ENCODE measurements at regions of chr10 and their contacts with region 1.

Region 1: DNA sequence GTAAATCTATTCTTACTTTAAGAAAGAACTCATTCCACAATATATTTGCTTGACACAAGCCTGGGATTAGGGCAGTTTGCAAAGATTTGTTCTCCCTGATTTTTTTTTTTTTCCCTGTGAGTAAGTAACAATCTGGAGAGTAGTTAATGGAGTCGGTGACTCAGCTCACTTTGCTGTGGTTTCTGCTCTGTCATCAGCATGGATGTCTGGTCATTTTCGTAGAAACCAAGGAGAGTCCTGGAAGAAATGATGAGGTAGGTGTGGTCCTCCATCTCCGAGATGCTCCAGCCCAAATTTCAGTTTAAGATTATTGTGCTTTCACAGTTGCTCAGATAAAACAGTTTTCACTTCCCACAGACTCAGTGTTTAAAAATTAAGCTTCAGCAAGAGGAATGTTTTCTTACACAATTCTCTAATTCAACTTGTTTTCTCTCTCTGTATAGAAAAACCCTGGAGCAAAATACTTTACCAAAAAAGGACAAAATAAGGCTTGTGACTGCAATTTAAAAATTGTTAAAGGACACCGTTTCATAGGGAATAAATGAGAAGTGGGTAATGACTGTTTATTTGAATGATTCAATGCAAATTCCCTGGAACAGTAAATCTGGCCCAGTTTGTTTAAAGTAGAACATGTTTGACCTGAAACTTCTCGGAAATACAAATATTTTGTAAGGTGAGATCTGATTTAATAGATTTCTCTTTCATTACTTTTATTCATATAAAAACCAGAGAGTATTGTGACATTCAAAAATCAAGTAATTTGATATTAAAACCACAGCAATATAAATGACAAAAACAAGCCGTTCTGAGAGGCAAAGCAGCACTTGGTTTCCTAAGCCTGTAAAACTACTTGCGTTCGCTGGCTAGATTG is 76.5 kb upstream of the PITRM1 start:
- DNase-seq: no peak

Region 2: DNA sequence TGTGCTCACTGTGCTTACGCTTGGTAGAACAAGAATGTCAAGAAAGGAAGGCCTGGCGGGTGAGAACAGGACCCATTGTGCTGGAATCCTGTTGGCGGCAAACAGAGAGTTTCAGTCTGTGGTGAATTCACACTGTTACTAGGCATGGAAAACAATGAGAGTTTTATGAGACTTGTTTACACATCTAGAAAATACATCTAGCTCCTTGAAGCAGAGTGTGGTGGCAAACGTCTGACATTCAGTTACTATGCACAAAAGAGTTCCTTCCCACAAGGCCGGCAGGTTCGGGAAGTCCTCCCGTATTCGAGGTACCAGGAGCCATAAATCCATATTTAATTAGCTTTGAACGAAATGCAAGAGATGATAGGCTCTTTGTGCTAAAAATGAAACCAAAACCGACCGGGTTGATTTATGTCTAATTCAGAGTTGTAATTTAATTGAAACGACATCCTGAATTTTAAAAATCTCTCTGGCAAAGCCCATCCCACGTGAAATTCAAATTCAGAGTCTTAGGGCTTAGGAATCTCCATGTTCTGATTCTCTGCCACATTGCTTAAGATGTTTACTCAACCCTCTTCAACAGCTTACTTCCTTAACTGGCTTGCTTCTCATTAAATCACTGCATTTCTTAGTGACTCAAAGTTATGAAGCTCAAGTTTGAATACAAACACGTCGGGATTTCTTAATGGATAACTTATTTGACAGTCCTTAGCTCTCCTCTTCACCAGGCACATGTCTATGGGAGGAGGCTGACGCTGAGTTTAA is 223.3 kb after region 1 on chr10:
- intact Hi-C with region 1: loop called in 1 of 2 experiments (anchors 10 kb)
- DNase-seq: no peak

Region 3: GRCh38 chr10:3775696-3776551 is 526.8 kb after region 1 on chr10:
- intact Hi-C with region 1: loop called in 1 of 2 experiments (anchors 2 kb)
- DNase-seq: peak; percentile 82

Region 4: GRCh38 chr10:4162571-4163286 is 913.6 kb after region 1 on chr10:
- intact Hi-C with region 1: no loop called
- DNase-seq: no peak

Region 5: DNA sequence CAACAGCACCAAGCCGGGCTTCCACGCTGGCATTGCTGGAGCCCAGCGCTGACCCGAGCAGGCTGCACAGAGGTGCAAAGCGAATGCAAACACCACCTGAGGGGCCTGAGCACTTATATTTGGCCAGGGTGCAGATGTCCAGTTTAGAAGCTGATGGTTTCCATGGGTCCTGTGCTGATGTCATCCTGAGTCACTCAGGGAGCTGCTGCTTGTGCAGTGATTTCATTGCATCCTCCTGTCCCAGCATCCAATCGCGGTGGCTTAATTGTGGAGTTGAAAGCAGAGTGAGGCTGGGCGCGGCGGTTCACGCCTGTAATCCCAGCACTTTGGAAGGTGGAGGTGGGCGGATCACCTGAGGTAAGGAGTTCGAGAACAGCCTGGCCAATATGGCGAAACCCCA is 946.1 kb after region 1 on chr10:
- intact Hi-C with region 1: loop called in 1 of 2 experiments (anchors 5 kb)
- DNase-seq: no peak

Region 6: DNA sequence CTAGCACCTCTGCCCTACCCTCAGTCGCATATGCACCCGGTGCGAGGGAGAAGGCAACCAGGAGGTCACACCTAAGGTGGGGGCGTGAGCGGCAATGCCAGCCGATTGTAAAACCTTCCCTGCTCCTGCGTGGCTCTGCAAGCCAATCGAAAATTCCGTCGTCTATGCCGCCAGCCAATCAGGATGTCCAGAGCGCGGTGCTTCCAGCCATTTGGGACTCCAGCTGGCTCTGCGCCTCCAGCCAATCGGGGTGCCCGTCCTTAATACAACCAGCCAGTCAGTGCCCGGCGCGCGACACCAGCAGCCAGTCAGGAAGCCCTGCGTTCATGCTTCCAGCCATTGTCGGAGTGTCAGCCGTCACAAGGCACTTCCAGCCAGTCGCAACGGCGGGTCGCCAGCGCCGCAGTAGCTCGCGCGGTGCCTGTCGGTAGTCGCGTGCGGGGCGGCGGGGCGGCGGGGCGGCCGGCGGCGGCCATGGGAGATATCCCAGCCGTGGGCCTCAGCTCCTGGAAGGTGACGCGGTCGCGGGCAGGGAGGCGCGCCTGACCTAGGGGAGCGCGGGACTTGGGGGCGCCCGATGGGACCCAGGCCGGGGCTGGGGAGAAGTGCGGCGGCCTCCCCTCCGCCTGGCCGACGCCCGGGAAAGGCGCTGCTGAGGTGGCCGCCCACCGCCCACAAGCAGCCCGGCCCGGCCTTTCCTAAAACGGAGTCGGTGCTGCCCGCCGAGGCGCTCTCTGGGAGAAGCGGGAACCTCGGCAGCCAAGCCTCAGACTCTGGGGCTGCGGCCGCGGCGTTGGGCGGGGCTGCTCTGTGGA is 1576.9 kb after region 1 on chr10 and contains the start of gene AKR1E2:
- intact Hi-C with region 1: no loop called
- DNase-seq: peak; percentile 97
- total RNA-seq, gene AKR1E2: 11.4 to 12.0 TPM

Measured in posterior vena cava (tissue), 2 donors.